ENCODE measurements at regions of chr14 and their contacts with region 1.

Region 1: GRCh38 chr14:55088356-55088755 is 36.9 kb downstream of the MAPK1IP1L start:
- DNase-seq: no peak
- H3K4me3 Mint-ChIP-seq: no peak overlapping the region
- H3K27ac Mint-ChIP-seq: no peak overlapping the region
- H3K4me1 Mint-ChIP-seq: peaks cover 17% of the 10 kb centered on the region
- H3K27me3 Mint-ChIP-seq: no peaks in the 10 kb centered on the region

Region 2: DNA sequence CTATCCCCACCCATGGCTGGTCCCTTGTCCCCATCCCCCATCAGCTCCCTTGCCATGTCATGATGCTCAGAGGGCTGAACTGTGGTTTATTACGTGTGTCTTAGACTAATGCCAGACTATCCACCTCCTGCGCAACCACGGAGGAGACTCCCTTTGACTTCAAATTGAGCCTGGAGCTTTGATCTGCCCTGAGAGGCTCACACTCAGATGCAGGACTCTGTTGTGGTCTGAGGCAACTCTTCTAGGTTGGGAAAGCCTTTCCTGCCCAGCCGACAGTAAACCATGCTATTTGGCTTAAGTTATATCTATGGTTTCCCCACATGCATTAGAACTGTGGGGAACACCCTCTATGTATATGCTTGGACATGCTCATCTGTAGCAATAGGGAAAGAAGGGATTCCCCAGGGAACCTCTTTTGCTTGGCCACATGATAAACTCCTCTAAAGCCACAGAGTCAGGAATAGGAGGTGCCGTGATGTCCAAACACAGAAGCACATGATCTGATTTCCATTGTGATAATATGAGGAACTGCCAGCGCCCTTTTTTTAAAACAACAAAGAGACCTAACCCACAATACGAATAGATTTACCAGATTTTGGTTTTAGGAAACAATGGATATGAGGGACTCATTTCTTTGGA is 29.6 kb after region 1 on chr14:
- CTCF ChIA-PET with region 1: interaction called, 20 read pairs
- POLR2A ChIA-PET with region 1: no interaction called
- DNase-seq: no peak
- H3K4me3 Mint-ChIP-seq: no peak overlapping the region
- H3K27ac Mint-ChIP-seq: no peak overlapping the region
- H3K4me1 Mint-ChIP-seq: peaks cover 2% of the 10 kb centered on the region
- H3K27me3 Mint-ChIP-seq: peaks cover 10% of the 10 kb centered on the region

Region 3: GRCh38 chr14:55160989-55161388 is 72.6 kb after region 1 on chr14:
- CTCF ChIA-PET with region 1: interaction called, 32 read pairs
- POLR2A ChIA-PET with region 1: no interaction called
- DNase-seq: no peak
- H3K4me3 Mint-ChIP-seq: no peak overlapping the region
- H3K27ac Mint-ChIP-seq: no peak overlapping the region
- H3K4me1 Mint-ChIP-seq: peaks cover 20% of the 10 kb centered on the region
- H3K27me3 Mint-ChIP-seq: no peaks in the 10 kb centered on the region